ENCODE measurements at regions of chr5 and their contacts with region 1.

Region 1: DNA sequence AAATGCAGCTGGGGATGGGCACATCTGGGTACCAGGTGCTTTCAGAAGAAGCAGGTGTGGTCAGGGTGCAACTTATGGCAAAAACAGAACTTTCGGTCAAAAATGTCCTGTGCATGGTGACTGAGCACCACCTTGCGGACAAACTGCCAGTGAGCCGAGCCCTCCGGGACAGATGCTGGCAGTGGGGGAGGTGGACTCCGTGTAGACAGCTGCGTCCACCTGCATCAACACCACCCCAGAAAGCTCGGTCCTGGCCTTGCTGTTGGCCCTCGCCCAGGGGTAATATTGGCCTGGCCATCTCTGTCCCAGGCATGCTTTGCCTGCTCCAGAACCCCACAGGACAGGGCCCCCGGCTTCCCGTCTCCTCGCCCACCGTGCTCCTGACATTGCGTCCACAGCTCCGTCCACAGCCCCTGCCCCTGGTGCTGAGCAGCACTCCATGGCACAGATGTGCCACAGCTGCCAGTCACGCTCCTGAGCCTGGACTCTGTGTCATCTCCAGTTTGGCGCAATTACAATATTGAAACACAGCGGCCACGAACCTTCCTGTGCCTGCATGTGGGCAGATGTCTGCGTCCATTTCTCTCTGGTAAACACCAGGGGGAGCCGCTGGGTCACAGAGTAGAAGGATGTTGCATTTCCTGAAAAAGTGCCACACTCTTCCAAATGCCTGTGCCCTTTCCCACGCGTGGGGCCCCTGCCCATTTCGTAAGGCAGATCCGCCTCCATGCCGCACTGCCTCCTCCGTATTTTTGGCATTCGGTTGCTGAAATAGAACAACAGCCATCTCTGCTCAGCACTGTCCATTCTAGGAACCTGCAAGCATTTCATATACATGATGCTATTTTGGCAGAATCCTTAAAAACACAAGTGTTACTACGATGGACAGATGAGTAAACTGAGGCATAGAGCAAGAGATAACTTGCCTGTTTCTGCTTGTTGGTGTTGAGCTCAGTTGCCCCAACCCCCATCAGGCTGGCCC is 33.4 kb upstream of the SLC6A19 start:
- DNase-seq: peak; percentile 85
- H3K4me3 ChIP-seq: peak overlapping the region; percentile 54
- H3K27ac ChIP-seq: no peak overlapping the region
- H3K4me1 ChIP-seq: peaks cover 16% of the 10 kb centered on the region
- CTCF ChIP-seq: peak; percentile 84

Region 2: DNA sequence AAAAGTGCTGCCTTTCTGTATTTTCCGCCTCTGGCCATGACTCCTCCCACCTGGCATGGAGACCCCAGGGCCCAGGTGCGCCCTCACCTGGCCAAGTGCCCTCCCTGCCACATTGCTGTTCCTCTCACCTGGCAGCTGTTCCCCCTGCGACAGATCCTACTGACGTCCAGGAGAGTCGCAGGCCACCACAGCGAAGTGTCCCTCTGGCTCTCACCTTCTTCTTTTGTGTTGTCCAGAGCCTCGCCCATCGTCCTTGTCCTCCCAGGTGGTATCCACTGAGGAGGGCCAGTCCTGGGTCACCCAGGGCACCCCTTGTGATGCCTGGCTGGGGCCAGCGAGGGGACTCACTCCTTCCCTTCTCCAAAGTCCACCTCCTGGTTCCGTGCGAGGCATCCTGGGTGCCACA is 156.8 kb before region 1 on chr5:
- CTCF ChIA-PET with region 1: interaction called, 3 read pairs
- POLR2A ChIA-PET with region 1: no interaction called
- intact Hi-C with region 1: loop called (anchors 1 kb)
- DNase-seq: peak; percentile 67
- H3K4me3 ChIP-seq: no peak overlapping the region
- H3K27ac ChIP-seq: no peak overlapping the region
- H3K4me1 ChIP-seq: no peaks in the 10 kb centered on the region
- CTCF ChIP-seq: peak; percentile 85

Region 3: DNA sequence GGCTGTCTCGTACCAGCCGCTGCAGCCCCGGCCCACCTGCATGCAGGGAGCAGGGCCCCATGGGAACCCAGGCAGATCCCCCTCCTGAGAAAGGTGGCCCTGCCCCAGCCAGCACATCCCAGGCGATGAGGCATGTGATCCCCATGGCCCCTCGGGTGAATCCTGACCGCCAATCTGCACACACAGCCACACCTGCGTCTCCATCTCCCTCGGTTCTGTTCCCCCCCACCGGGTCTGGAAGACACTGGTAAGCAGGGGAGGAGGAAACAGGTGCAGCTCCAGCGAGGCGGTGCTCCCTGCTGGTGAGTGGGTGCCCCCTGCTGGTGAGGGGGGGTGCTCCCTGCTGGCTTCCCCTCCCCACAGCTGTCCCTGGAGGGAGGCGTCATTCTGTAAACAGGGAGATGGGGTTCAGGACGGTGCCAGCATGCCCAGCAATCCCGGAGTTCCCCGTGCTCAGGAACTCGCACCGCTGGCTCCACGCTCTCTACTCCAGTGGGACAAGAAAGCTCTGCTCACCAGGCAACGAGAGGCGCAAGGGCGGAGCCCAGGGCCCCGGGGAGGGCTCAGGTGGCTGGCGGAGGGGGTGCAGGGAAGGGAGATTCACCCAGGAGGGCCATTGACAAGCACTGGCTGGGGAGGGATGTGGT is 27.7 kb before region 1 on chr5:
- CTCF ChIA-PET with region 1: interaction called, 4 read pairs
- POLR2A ChIA-PET with region 1: interaction called, 3 read pairs
- intact Hi-C with region 1: loop called (anchors 1 kb)
- DNase-seq: peak; percentile 90
- H3K4me3 ChIP-seq: no peak overlapping the region
- H3K27ac ChIP-seq: no peak overlapping the region
- H3K4me1 ChIP-seq: peaks cover 20% of the 10 kb centered on the region
- CTCF ChIP-seq: peak; percentile 92

Region 4: DNA sequence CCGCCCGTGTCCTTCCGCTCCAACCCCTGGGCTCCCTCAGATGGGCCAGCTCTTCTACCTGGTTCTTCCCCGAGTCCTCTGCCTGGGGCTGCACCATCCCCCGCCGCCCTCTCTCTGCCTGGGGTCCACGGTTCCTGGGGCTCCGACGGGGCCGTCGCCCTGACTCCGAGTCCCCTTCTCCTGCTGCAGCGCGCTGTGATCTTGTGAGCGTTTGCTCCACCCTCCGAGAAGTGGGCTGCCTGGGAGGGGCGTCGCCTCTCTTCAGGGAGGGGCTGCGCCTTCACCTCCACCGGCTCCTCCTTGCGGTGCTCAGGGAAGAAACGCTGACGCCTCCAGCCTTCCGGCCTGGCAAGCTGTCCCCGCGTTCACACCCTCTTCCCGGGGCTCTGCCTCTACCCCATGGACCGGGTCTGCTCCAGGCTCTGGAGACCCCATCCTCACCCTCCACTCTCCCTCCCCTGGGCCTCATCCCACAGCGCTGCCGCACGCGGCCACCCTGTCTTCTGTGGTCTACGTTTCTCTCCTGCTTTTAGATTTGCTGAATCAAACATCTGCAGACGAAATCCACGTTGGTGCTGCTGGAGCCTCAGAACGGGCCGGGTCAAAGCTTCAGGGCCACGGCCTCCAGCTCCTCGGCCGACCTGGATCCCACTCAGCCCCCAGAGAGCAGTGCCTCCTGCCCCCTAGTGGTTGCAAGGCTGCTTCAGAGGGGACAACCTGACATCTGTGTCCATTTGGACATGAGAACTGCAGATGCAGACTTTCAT is 299.9 kb after region 1 on chr5:
- CTCF ChIA-PET with region 1: no interaction called
- POLR2A ChIA-PET with region 1: no interaction called
- intact Hi-C with region 1: loop called (anchors 1 kb)
- DNase-seq: peak; percentile 49
- H3K4me3 ChIP-seq: no peak overlapping the region
- H3K27ac ChIP-seq: no peak overlapping the region
- H3K4me1 ChIP-seq: no peaks in the 10 kb centered on the region
- CTCF ChIP-seq: peak; percentile 75

Measured in OCI-LY7 (cell line).